ENCODE measurements at regions of chr19 and their contacts with region 1.

Region 1: GRCh38 chr19:28705008-28705407 is 507.9 kb downstream of the UQCRFS1 start:
- DNase-seq: peak; percentile 62
- ATAC-seq: peak; percentile 87
- H3K4me3 ChIP-seq: no peak overlapping the region
- H3K27ac ChIP-seq: no peak overlapping the region
- H3K4me1 ChIP-seq: no peaks in the 10 kb centered on the region
- H3K27me3 ChIP-seq: no peaks in the 10 kb centered on the region
- CTCF ChIP-seq: peak; percentile 47
- POLR2A ChIP-seq: no peak
- RAD21 ChIP-seq: no peak

Region 2: DNA sequence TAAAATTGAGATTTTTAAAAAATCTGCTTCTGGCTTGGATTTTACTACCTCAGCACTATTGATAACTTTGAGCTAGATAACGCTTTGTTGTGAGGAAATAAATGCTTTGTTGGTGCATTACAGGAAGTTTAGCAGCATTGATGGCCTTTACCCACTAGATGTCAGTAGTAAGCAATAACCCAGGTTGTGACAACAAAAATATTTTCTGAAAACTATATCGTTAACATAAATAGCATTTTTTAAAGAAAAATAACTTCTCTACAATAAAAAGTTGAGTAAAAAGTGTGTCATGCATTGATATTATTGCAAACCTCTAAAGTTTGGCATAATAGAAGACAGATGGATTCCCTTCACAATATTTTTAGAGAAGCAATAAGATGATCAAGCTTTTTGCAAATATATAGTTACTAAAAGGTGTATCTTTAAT is 738.6 kb before region 1 on chr19:
- CTCF ChIA-PET with region 1: no interaction called
- POLR2A ChIA-PET with region 1: no interaction called
- dilution Hi-C with region 1: no loop called
- in situ Hi-C with region 1: loop called (anchors 25 kb)
- intact Hi-C with region 1: loop called (anchors 5 kb)
- DNase-seq: no peak
- ATAC-seq: no peak
- H3K4me3 ChIP-seq: no peak overlapping the region
- H3K27ac ChIP-seq: no peak overlapping the region
- H3K4me1 ChIP-seq: no peaks in the 10 kb centered on the region
- H3K27me3 ChIP-seq: no peaks in the 10 kb centered on the region
- CTCF ChIP-seq: peak; percentile 48
- POLR2A ChIP-seq: no peak
- RAD21 ChIP-seq: peak; percentile 32; the same call in 1 of the 2 replicates

Region 3: GRCh38 chr19:28466107-28467045 is 238.6 kb before region 1 on chr19:
- CTCF ChIA-PET with region 1: no interaction called
- POLR2A ChIA-PET with region 1: no interaction called
- dilution Hi-C with region 1: no loop called
- in situ Hi-C with region 1: loop called (anchors 5 kb)
- intact Hi-C with region 1: loop called (anchors 5 kb)
- DNase-seq: peak; percentile 15
- ATAC-seq: no peak
- H3K4me3 ChIP-seq: no peak overlapping the region
- H3K27ac ChIP-seq: no peak overlapping the region
- H3K4me1 ChIP-seq: no peaks in the 10 kb centered on the region
- H3K27me3 ChIP-seq: no peaks in the 10 kb centered on the region
- CTCF ChIP-seq: peak; percentile 62
- POLR2A ChIP-seq: no peak
- RAD21 ChIP-seq: peak; percentile 50

Measured in IMR-90 (cell line).